Activated T-helper 2 cell treated with anti-CD3 and anti-CD28 coated beads, Interferon-gamma antibody, Interleukin-2, Interleukin-4, amounts not matched to agents 10 μg/mL and 5 μg/mL and 100 μg/mL, durations not matched to agents 14 hours and 24 hours and 36 hours (primary cell): ENCODE measurements at regions of chr19 and their contacts with region 1.

Region 1: DNA sequence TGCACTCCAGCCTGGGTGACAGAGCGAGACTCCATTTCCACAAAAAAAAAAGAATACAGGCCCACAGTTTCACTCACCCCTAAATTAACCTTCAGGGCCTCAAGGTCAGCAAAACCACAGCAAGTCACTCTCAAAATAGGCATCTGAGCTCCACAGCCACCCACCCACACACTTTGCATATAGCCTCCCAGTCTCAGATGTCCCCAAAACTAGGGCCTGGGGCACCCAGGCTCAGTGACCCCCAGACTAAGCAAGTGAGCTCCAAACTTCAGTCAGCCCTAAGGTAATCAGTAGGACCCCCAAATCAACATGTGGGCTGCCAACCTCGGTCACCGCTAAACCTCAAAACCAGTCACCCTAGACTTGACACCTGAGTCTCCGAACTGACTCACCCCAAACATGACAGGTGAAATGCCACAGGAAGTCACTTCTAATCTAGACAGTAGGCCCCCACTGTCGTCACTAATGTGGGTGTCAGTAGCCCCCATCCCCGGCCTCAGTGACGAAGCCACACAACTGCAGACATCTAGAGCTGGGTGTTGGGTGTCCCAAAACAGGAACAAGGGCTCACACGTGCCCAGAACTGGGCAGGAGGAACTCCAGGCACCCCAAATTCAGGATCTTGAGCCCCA is 13.9 kb downstream of the RABAC1 start:
- DNase-seq: peak; percentile 67
- H3K4me3 Mint-ChIP-seq: peak overlapping the region; percentile 13
- H3K27ac Mint-ChIP-seq: peak overlapping the region; percentile 97
- H3K4me1 Mint-ChIP-seq: peaks cover 44% of the 10 kb centered on the region
- H3K27me3 Mint-ChIP-seq: peaks cover 6% of the 10 kb centered on the region

Region 2: DNA sequence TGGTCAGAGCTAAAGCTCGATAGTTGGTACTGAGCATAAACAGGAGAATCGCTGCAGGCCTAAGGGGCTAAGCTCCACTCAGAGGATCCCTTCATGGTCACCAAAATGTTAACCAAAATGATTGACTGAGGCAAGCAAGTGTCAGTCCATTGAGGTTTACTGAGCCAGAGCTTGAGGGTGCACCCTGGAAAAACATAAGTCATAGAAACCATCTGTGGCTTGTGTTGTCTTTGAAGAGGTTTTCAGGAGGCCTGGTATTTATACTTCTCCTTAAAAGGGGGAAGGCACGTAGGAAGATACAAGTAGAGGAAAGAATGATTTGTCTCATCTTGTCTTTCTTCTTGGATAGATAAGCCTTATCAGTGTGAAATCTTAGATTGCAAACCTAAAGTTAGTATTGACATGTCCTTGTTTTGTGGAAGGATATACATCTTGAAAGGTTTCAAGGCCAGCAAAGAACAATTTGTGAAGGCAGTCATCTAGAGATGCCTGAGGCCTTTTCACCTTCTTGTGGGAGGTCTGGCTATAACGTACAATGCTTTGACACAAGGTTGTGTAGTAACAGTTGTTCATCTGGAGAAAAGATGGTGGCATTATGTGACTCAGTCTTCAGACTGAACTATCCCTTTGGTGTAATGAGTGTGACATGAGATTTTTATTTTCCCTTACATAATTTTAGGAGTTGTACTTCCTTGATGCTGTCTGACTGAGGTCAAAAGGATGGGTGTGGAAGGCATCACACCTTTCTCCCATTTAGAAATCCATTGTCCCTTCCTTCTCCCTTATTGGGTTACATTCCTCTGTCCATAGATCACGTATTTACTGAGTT is 204.6 kb before region 1 on chr19:
- intact Hi-C with region 1: loop called (anchors 1 kb)
- DNase-seq: no peak
- H3K4me3 Mint-ChIP-seq: no peak overlapping the region
- H3K27ac Mint-ChIP-seq: peak overlapping the region; percentile 51
- H3K4me1 Mint-ChIP-seq: peaks cover 18% of the 10 kb centered on the region
- H3K27me3 Mint-ChIP-seq: peaks cover 62% of the 10 kb centered on the region

Region 3: GRCh38 chr19:41821003-41821735 is 124.1 kb before region 1 on chr19:
- intact Hi-C with region 1: no loop called
- DNase-seq: peak; percentile 30
- H3K4me3 Mint-ChIP-seq: no peak overlapping the region
- H3K27ac Mint-ChIP-seq: no peak overlapping the region
- H3K4me1 Mint-ChIP-seq: no peaks in the 10 kb centered on the region
- H3K27me3 Mint-ChIP-seq: peaks cover 20% of the 10 kb centered on the region

Region 4: DNA sequence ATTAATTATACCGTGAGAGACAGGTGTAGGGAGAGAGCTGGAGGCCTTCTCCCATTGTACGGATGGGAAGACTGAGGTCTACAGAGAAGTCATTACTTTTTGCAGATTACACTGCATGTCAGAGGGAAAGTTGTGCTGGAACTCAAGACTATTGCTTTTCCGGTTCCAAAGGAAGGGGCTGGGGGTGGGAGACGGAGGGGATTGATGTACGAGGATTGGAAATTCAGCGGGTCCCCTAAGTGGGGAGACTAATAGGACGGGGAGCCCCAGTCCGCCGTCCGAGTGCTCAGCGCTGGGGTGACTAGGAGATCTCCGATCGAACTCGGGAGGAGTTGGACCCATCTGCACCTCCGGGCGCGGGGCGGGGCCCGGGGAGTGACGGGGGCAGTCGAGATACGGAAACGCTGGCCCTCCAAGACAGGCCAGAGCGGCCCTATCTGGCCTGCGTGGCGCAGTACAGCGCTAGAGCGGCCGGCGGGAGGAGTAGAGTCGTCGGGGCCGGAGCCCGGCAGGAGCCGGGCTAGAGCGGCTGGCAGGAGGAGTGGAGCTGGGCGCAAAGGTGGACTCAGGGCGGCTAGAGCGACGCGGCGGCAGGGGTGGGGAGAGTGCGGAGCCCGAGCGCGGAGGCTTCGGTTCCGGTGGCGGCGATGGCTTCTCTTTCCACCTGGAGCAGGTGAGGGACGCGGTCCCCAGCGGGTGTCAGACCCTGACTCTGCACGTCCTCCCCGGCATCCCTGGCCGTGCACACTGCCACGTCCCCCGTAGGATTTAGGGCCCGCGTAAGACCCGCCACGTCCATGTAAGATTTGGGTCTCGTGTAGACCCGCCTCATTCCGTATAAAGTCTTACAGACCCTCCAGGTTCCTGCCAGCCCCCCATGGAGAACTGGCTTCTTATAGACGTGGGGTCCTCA is 61.2 kb before region 1 on chr19:
- intact Hi-C with region 1: loop called (anchors 1 kb)
- DNase-seq: peak; percentile 90
- H3K4me3 Mint-ChIP-seq: peak overlapping the region; percentile 81
- H3K27ac Mint-ChIP-seq: peak overlapping the region; percentile 94
- H3K4me1 Mint-ChIP-seq: peaks cover 45% of the 10 kb centered on the region
- H3K27me3 Mint-ChIP-seq: no peaks in the 10 kb centered on the region

Region 5: DNA sequence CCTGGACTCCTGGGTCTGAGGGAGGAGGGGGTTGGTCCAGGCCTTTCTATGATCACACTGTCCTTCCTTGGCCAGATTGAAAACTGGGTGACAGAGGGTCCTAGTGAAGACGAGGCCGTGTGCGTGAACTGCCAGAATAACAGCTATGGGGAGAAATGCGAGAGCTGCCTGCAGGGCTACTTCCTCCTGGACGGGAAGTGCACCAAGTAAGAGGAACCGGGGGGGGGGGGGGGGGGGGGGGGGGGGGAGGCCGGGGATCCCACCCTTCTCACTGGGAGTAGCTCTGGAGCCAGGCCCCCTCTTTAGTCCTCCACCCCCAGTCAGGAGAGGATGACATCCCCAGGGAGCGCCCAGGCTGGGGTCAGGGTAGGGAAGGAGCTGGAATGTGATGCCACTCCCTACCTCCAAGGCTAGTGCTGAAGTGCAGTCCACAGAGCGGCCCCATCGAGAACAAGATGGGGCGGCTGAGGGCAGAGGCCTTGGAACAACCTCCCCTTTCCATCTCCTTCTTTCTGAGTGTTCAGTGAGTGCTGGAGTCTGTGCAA is 425.4 kb after region 1 on chr19:
- intact Hi-C with region 1: no loop called
- DNase-seq: no peak
- H3K4me3 Mint-ChIP-seq: no peak overlapping the region
- H3K27ac Mint-ChIP-seq: no peak overlapping the region
- H3K4me1 Mint-ChIP-seq: no peaks in the 10 kb centered on the region
- H3K27me3 Mint-ChIP-seq: no peaks in the 10 kb centered on the region